AG04449 (cell line): ENCODE measurements at regions of chr6 and their contacts with region 1.

Region 1: GRCh38 chr6:84779380-84779779 is 15.0 kb upstream of the TBX18 start:
- DNase-seq: no peak
- H3K4me3 ChIP-seq: no peak overlapping the region
- CTCF ChIP-seq: peak; percentile 14

Region 2: GRCh38 chr6:84645000-84645399 is 134.4 kb before region 1 on chr6:
- CTCF ChIA-PET with region 1: no interaction called
- POLR2A ChIA-PET with region 1: no interaction called
- DNase-seq: no peak
- H3K4me3 ChIP-seq: no peak overlapping the region
- CTCF ChIP-seq: no peak

Region 3: GRCh38 chr6:84867521-84867920 is 88.1 kb after region 1 on chr6:
- CTCF ChIA-PET with region 1: no interaction called
- POLR2A ChIA-PET with region 1: no interaction called
- DNase-seq: peak; percentile 31
- H3K4me3 ChIP-seq: no peak overlapping the region
- CTCF ChIP-seq: no peak

Region 4: GRCh38 chr6:85092226-85092625 is 312.8 kb after region 1 on chr6:
- CTCF ChIA-PET with region 1: no interaction called
- POLR2A ChIA-PET with region 1: no interaction called
- DNase-seq: no peak
- H3K4me3 ChIP-seq: no peak overlapping the region
- CTCF ChIP-seq: no peak

Region 5: GRCh38 chr6:85323435-85324040 is 544.2 kb after region 1 on chr6:
- CTCF ChIA-PET with region 1: interaction called, 15 read pairs
- POLR2A ChIA-PET with region 1: no interaction called
- DNase-seq: peak; percentile 54
- H3K4me3 ChIP-seq: no peak overlapping the region
- CTCF ChIP-seq: peak; percentile 83